Activated T-helper 1 cell treated with anti-CD3 and anti-CD28 coated beads, Interleukin-12 subunit alpha, Interleukin-12 subunit beta, Interleukin-2, Interleukin-4 antibody, amounts not matched to agents 30 ng/mL and 10 ng/mL and 1 ng/mL, durations not matched to agents 14 hours and 24 hours and 36 hours (primary cell): ENCODE measurements at regions of chr2 and their contacts with region 1.

Region 1: DNA sequence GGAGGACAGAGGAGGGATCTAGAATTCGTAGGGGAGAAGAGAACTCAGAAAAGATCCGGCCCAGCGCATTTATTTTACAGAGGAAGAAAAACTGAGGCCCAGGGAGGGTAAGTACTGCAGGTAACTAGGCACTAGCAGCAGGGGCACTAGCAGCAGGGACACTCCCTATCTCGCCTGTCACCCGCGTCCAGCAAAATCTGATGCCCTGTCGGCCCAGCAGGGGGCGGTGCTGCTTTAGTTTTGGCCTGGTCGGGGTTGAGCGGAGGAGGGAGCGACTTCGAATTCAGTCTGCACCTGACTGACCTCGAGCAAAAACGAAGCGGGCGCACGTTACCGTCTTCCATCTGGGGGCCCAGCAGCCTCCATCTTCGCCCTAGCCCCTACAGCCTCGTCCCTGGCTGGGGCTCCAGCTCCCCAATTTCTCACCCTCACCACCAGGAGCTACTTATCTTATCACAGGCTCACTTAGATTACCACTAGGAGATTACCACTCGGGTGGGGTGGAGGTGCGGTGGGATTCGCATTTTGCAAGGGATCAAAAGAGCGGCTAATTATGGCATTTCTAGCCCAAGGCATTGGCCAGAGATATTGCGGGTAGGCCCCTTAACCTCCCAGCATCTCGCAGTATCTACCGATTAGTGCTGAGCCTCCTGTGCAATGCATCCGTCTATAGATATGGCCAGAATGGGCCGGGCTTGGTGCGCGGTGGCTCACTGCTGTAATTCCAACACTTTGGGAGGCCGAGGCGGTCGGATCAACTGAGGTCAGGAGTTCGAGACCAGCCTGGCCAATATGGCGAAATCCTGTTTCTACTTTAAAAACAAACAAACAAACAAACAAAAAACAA is 17.8 kb upstream of the CD8A start:
- DNase-seq: peak; percentile 86
- H3K4me3 Mint-ChIP-seq: peak overlapping the region; percentile 87
- H3K27ac Mint-ChIP-seq: no peak overlapping the region
- H3K4me1 Mint-ChIP-seq: peaks cover 27% of the 10 kb centered on the region
- H3K27me3 Mint-ChIP-seq: peaks cover 45% of the 10 kb centered on the region

Region 2: GRCh38 chr2:86661333-86661732 is 147.2 kb before region 1 on chr2:
- intact Hi-C with region 1: no loop called
- DNase-seq: no peak
- H3K4me3 Mint-ChIP-seq: no peak overlapping the region
- H3K27ac Mint-ChIP-seq: no peak overlapping the region
- H3K4me1 Mint-ChIP-seq: no peaks in the 10 kb centered on the region
- H3K27me3 Mint-ChIP-seq: no peaks in the 10 kb centered on the region

Region 3: GRCh38 chr2:86764661-86765307 is 43.8 kb before region 1 on chr2:
- intact Hi-C with region 1: loop called (anchors 1 kb)
- DNase-seq: peak; percentile 6
- H3K4me3 Mint-ChIP-seq: no peak overlapping the region
- H3K27ac Mint-ChIP-seq: no peak overlapping the region
- H3K4me1 Mint-ChIP-seq: peaks cover 17% of the 10 kb centered on the region
- H3K27me3 Mint-ChIP-seq: no peaks in the 10 kb centered on the region

Region 4: GRCh38 chr2:86790676-86791572 is 17.6 kb before region 1 on chr2 and contains the start of gene CD8A:
- intact Hi-C with region 1: loop called (anchors 1 kb)
- DNase-seq: no peak
- H3K4me3 Mint-ChIP-seq: peak within 1 kb of the TSS; percentile 64
- H3K27ac Mint-ChIP-seq: peak within 1 kb of the TSS; percentile 1
- H3K4me1 Mint-ChIP-seq: peaks cover 40% of the 10 kb centered on the region
- H3K27me3 Mint-ChIP-seq: peaks cover 56% of the 10 kb centered on the region
- total RNA-seq, gene CD8A: 2.2 and 2.4 TPM in 2 replicates